IMR-90 (cell line): ENCODE measurements at regions of chr4 and their contacts with region 1.

Region 1: GRCh38 chr4:1172971-1173757 is 781 bp upstream of the SPON2 start:
- DNase-seq: peak; percentile 78
- ATAC-seq: peak; percentile 83
- H3K4me3 ChIP-seq: no peak overlapping the region
- H3K27ac ChIP-seq: peak overlapping the region; percentile 80
- H3K4me1 ChIP-seq: peaks cover 23% of the 10 kb centered on the region
- H3K27me3 ChIP-seq: no peaks in the 10 kb centered on the region
- CTCF ChIP-seq: no peak
- POLR2A ChIP-seq: no peak
- RAD21 ChIP-seq: no peak

Region 2: DNA sequence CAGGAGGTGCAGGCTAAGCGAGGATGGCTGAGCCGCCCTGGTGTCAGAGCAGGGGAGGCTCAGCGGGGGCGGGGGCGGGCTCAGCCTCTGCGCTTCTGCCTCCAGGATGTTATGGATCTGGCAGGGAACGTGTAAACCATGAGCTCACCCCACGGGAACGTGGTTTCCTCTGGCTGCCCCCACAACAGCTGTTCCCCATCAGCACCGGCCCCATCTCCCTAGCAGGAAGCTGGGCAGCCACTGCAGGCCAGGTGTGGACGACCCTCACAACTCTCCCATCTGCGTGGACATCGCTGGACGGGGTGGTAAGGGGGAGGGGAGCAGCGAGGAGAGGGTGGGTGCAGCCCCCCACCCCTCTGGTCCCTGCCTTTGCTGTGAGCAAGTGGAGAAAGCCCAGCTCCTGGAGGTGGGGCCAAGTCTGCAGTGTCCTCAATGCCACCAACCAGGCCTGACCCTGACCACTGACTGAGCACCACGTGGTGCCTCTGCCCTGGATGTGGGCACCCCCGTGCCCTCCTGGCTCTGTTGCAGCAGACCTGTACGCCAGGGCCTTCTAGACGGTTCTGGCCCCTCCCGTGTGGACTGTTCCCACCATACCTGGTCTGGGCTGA is 27.4 kb after region 1 on chr4:
- CTCF ChIA-PET with region 1: no interaction called
- POLR2A ChIA-PET with region 1: interaction called, 10 read pairs
- dilution Hi-C with region 1: no loop called
- in situ Hi-C with region 1: no loop called
- intact Hi-C with region 1: loop called (anchors 5 kb)
- DNase-seq: peak; percentile 95
- ATAC-seq: peak; percentile 75
- H3K4me3 ChIP-seq: no peak overlapping the region
- H3K27ac ChIP-seq: peak overlapping the region; percentile 97
- H3K4me1 ChIP-seq: peaks cover 39% of the 10 kb centered on the region
- H3K27me3 ChIP-seq: no peaks in the 10 kb centered on the region
- CTCF ChIP-seq: no peak
- POLR2A ChIP-seq: no peak
- RAD21 ChIP-seq: no peak